ENCODE measurements at regions of chr19 and their contacts with region 1.

Region 1: DNA sequence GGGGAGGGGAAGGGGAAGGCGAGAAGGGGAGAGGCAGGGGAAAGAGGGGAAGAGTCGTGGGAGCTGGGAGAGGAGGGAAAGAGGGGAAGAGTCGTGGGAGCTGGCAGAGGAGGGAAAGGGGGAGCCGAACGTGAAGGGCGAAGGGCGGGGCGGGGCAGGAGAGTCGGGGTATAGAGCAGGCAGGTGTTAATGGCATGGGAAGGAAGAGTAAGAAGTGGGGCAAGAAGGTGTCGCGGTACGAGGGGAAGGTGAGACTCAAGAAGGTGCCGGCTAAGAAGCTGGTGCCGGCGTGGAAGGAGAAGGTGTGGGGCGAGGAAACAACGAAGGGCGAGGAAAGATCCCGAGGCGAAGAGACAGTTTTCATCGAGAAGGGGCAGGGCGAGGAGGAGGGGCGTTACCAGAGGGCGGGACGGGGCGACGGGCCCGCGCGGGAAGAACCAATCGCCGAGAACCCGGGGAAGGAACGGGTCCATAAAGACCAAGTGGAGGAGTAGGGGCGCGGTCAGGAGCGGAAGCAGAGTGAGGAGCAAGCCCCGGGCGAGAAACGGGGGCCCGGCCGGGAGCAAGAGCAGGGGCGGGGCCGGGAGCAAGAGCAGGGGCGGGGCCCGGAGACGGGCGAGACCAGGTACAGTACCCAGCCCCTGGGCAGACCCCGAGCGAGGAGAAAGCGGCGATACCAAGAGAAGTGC is 463 bp downstream of the CATSPERG start:
- DNase-seq: peak; percentile 98
- ATAC-seq: peak; percentile 75
- H3K4me3 Mint-ChIP-seq: peak overlapping the region; percentile 82
- H3K27ac Mint-ChIP-seq: peak overlapping the region; percentile 98
- H3K4me1 Mint-ChIP-seq: peaks cover 12% of the 10 kb centered on the region
- H3K27me3 Mint-ChIP-seq: no peaks in the 10 kb centered on the region

Region 2: DNA sequence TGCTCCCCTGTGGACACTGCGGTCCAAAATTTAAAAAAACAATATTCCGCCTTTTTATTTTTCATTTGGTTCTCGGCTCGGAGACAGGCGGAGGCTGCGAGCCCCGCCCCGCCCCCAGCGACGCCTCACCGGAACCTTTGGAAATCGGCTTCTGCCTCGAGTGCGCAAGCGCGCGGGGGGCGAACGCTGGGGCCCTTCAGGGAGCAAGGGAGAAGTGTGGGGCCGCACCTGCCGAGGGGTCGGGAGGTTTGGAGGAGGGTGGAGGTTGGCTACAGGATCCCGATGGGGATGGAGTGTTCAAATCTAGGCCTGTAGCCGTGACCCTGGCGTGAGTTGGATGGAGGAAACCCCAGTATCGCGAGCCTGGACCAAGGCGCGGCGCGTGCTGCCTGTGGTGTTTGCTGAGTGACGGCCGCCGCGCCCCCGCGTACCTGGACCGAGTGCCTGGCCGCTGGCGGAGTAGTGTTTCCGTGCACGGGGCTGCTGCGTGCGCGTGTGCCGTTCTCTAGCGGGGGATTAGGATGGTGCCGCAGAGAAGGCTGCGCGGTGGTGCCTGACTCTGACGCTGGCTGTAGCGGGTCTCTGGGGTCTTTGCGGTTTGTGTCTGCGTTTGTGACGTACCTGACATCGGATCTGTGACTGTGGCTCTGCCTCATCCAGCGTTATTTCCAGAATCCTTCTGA is 680.3 kb before region 1 on chr19:
- CTCF ChIA-PET with region 1: no interaction called
- POLR2A ChIA-PET with region 1: no interaction called
- intact Hi-C with region 1: loop called in 1 of 2 experiments (anchors 5 kb)
- DNase-seq: peak; percentile 93
- ATAC-seq: peak; percentile 79
- H3K4me3 Mint-ChIP-seq: peak overlapping the region; percentile 94
- H3K27ac Mint-ChIP-seq: peak overlapping the region; percentile 99
- H3K4me1 Mint-ChIP-seq: peaks cover 33% of the 10 kb centered on the region
- H3K27me3 Mint-ChIP-seq: no peaks in the 10 kb centered on the region

Region 3: DNA sequence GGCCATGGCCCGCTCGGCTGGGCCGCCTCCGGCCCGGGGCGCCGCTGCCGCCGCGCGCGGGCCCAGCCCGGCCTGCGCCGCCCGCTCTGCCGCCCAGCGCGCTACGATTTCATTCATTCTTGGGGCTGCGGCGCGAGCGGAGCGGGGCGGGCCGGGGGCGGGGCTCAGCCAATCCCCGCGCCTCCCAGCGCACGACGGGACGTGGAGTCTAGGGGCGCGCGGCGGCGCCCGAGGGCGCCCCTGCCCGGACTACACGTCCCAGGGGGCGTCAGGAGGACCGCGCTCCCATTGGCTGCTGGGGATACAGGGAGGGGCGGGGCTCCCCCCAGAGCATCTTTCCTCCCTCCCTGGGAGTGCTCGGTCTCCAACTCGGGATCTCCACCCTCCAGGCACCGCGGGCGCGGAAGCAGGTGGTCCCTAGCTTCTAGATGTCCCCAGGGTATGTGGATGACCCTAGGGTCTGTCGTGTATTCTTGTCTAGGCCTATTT is 106.5 kb before region 1 on chr19:
- CTCF ChIA-PET with region 1: interaction called, 12 read pairs
- POLR2A ChIA-PET with region 1: no interaction called
- intact Hi-C with region 1: loop called (anchors 1 to 2 kb)
- DNase-seq: peak; percentile 87
- ATAC-seq: peak; percentile 96
- H3K4me3 Mint-ChIP-seq: no peak overlapping the region
- H3K27ac Mint-ChIP-seq: no peak overlapping the region
- H3K4me1 Mint-ChIP-seq: peaks cover 8% of the 10 kb centered on the region
- H3K27me3 Mint-ChIP-seq: peaks cover 39% of the 10 kb centered on the region

Region 4: GRCh38 chr19:38315657-38316476 is 20.2 kb before region 1 on chr19 and contains the start of gene YIF1B:
- CTCF ChIA-PET with region 1: interaction called, 8 read pairs
- POLR2A ChIA-PET with region 1: no interaction called
- intact Hi-C with region 1: loop called (anchors 1 kb)
- DNase-seq: peak; percentile 97
- ATAC-seq: peak; percentile 95
- H3K4me3 Mint-ChIP-seq: peak within 1 kb of the TSS; percentile 94
- H3K27ac Mint-ChIP-seq: peak within 1 kb of the TSS; percentile 98
- H3K4me1 Mint-ChIP-seq: peaks cover 35% of the 10 kb centered on the region
- H3K27me3 Mint-ChIP-seq: no peaks in the 10 kb centered on the region
- total RNA-seq, gene YIF1B: 76.3 to 90.1 TPM

Region 5: GRCh38 chr19:38387550-38388348 is 51.7 kb after region 1 on chr19 and contains the start of gene GGN:
- CTCF ChIA-PET with region 1: interaction called, 3 read pairs
- POLR2A ChIA-PET with region 1: no interaction called
- intact Hi-C with region 1: loop called (anchors 1 to 5 kb)
- DNase-seq: peak; percentile 94
- ATAC-seq: peak; percentile 81
- H3K4me3 Mint-ChIP-seq: peak within 1 kb of the TSS; percentile 75
- H3K27ac Mint-ChIP-seq: peak within 1 kb of the TSS; percentile 76
- H3K4me1 Mint-ChIP-seq: peaks cover 26% of the 10 kb centered on the region
- H3K27me3 Mint-ChIP-seq: peaks cover 14% of the 10 kb centered on the region
- total RNA-seq, gene GGN: 0.30 to 0.51 TPM

Region 6: GRCh38 chr19:38433268-38433733 is 97.2 kb after region 1 on chr19 and contains the start of gene RYR1:
- CTCF ChIA-PET with region 1: no interaction called
- POLR2A ChIA-PET with region 1: no interaction called
- intact Hi-C with region 1: no loop called
- DNase-seq: peak; percentile 77
- ATAC-seq: peak; percentile 57
- H3K4me3 Mint-ChIP-seq: peak within 1 kb of the TSS; percentile 51
- H3K27ac Mint-ChIP-seq: no peak within 1 kb of the TSS
- H3K4me1 Mint-ChIP-seq: peaks cover 22% of the 10 kb centered on the region
- H3K27me3 Mint-ChIP-seq: peaks cover 9% of the 10 kb centered on the region
- total RNA-seq, gene RYR1: 2.0 to 3.1 TPM

Region 7: GRCh38 chr19:38506723-38507550 is 170.8 kb after region 1 on chr19:
- CTCF ChIA-PET with region 1: interaction called, 3 read pairs
- POLR2A ChIA-PET with region 1: no interaction called
- intact Hi-C with region 1: loop called in 1 of 2 experiments (anchors 1 kb)
- DNase-seq: peak; percentile 98
- ATAC-seq: peak; percentile 94
- H3K4me3 Mint-ChIP-seq: no peak overlapping the region
- H3K27ac Mint-ChIP-seq: no peak overlapping the region
- H3K4me1 Mint-ChIP-seq: peaks cover 6% of the 10 kb centered on the region
- H3K27me3 Mint-ChIP-seq: peaks cover 2% of the 10 kb centered on the region